SK-N-SH (cell line): ENCODE measurements at regions of chr20 and their contacts with region 1.

Region 1: DNA sequence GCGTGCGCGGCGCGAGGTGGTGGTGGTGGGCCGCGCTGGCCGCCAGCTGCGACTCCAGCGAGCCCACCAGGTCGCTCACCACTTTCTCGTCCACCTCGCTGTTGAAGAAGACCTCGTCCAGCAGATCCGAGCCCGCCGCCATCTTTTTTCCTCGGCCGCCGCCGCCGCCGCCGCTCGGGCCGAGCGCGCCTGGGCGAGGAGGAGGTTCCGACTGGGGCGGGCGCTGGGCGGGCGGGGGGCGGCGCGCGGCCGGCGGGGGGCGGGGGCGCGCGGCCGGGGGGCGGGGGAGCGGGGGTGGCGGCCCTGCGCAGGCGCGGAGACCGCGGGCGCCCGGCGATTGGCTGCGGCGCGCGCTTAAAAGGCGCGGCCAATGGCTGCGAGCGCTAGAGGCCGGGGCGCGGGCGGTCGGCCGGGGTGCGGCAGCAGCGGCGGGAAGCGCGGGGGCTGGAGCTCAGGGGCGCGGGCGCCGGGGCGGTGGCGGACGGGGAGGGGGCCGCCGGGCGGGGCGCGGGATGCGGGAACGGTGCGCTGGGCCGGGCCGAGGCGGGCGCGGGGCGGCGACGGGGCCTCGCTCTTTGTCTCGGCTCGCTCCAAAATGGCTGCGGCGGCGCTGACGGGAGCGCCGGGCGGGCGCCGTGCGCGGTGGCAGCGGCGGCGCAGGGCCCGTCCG is at the start of gene TAF4:
- DNase-seq: peak; percentile 100
- H3K4me3 ChIP-seq: peak within 1 kb of the TSS; percentile 70 to 77
- H3K27ac ChIP-seq: peak within 1 kb of the TSS; percentile 58 to 88; a peak in 3 of 4 replicates
- H3K4me1 ChIP-seq: peaks cover 20 to 30% of the 10 kb centered on the region in 2 experiments; a peak in 3 of 4 replicates
- H3K27me3 ChIP-seq: no peaks in the 10 kb centered on the region
- CTCF ChIP-seq: no peak
- EP300 ChIP-seq: peak in 1 of 2 experiments; percentile 15; a peak in 1 of 4 replicates
- RAD21 ChIP-seq: no peak
- polyA plus RNA-seq, gene TAF4: 2.9 and 4.8 TPM in 2 replicates

Region 2: GRCh38 chr20:62025832-62026563 is 39.8 kb before region 1 on chr20:
- CTCF ChIA-PET with region 1: interaction called, 6 read pairs
- POLR2A ChIA-PET with region 1: interaction called, 10 read pairs
- DNase-seq: peak; percentile 58
- H3K4me3 ChIP-seq: no peak overlapping the region
- H3K27ac ChIP-seq: peak overlapping the region in 1 of 2 experiments; percentile 29; a peak in 2 of 4 replicates
- H3K4me1 ChIP-seq: peaks cover 0 to 59% of the 10 kb centered on the region in 2 experiments; a peak in 1 of 4 replicates
- H3K27me3 ChIP-seq: no peaks in the 10 kb centered on the region
- CTCF ChIP-seq: no peak
- EP300 ChIP-seq: no peak
- RAD21 ChIP-seq: peak; percentile 41